GM10248 (cell line): ENCODE measurements at regions of chrX and their contacts with region 1.

Region 1: GRCh38 chrX:117972711-117973109 is 143.9 kb downstream of the KLHL13 start:
- DNase-seq: no peak
- CTCF ChIP-seq: no peak

Region 2: GRCh38 chrX:117985241-117985640 is 12.5 kb after region 1 on chrX:
- CTCF ChIA-PET with region 1: interaction called, 20 read pairs
- POLR2A ChIA-PET with region 1: no interaction called
- DNase-seq: no peak
- CTCF ChIP-seq: no peak

Region 3: GRCh38 chrX:118100091-118100490 is 127.4 kb after region 1 on chrX:
- CTCF ChIA-PET with region 1: no interaction called
- POLR2A ChIA-PET with region 1: no interaction called
- DNase-seq: no peak
- CTCF ChIP-seq: no peak